AG04450 (cell line): ENCODE measurements at regions of chr5 and their contacts with region 1.

Region 1: GRCh38 chr5:127011961-127012644 is 18.3 kb downstream of the MARCHF3 start:
- DNase-seq: no peak
- H3K4me3 ChIP-seq: no peak overlapping the region
- H3K27ac ChIP-seq: no peak overlapping the region
- H3K27me3 ChIP-seq: no peaks in the 10 kb centered on the region
- CTCF ChIP-seq: no peak

Region 2: DNA sequence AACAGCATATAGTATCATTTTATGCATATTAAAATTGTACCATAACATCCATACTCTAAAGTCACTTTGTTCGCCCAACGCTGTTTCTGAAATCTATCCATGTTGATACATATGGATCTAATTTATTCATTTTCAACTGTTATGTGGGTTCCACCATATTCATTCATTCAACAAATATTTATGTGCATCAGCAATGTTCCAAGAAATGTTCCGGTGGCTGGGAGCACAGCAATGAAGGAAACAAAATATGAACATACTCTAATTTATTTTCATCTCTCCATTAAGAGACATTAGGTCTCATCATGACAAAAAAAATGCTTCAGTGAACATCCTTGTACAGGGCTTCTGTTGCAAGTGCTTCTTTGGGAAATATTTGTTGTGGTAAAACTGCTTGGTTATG is 57.1 kb before region 1 on chr5:
- CTCF ChIA-PET with region 1: no interaction called
- POLR2A ChIA-PET with region 1: no interaction called
- DNase-seq: no peak
- H3K4me3 ChIP-seq: no peak overlapping the region
- H3K27ac ChIP-seq: no peak overlapping the region
- H3K27me3 ChIP-seq: no peaks in the 10 kb centered on the region
- CTCF ChIP-seq: no peak

Region 3: GRCh38 chr5:127030259-127031146 is 18.4 kb after region 1 on chr5 and contains the start of gene MARCHF3:
- CTCF ChIA-PET with region 1: interaction called, 11 read pairs
- POLR2A ChIA-PET with region 1: no interaction called
- DNase-seq: peak; percentile 84
- H3K4me3 ChIP-seq: peak within 1 kb of the TSS; percentile 94
- H3K27ac ChIP-seq: peak within 1 kb of the TSS; percentile 60
- H3K27me3 ChIP-seq: no peaks in the 10 kb centered on the region
- CTCF ChIP-seq: peak; percentile 40
- polyA plus RNA-seq, gene MARCHF3: 6.7 and 6.8 TPM in 2 replicates